Mammary epithelial cell (primary cell): ENCODE measurements at regions of chr1 and their contacts with region 1.

Region 1: GRCh38 chr1:167263819-167264464 is 43.3 kb downstream of the POU2F1 start:
- DNase-seq: no peak
- H3K4me3 ChIP-seq: no peak overlapping the region
- H3K27ac ChIP-seq: no peak overlapping the region
- H3K4me1 ChIP-seq: no peaks in the 10 kb centered on the region
- H3K27me3 ChIP-seq: no peaks in the 10 kb centered on the region
- CTCF ChIP-seq: no peak

Region 2: DNA sequence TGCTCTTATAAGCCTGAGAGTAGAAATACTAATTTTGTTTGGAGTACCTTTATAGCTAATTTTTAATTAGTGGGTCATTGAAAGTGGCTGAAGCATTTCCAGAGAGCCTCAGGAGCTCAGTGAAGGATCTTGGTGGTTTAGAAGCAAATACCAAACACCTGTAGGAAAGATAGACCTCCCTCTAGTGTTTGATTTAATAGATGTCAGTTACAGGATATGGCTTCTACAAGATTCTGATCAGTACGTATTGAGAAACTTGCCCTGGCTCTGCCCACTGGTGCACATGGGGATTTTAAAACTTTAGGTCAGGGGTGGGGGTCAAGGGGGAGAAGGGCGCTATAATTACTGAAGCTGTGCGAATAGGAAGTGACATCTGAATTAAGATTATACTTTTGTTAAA is 78.9 kb after region 1 on chr1:
- CTCF ChIA-PET with region 1: no interaction called
- dilution Hi-C with region 1: no loop called
- in situ Hi-C with region 1: no loop called
- intact Hi-C with region 1: loop called (anchors 2 kb)
- DNase-seq: no peak
- H3K4me3 ChIP-seq: no peak overlapping the region
- H3K27ac ChIP-seq: no peak overlapping the region
- H3K4me1 ChIP-seq: no peaks in the 10 kb centered on the region
- H3K27me3 ChIP-seq: no peaks in the 10 kb centered on the region
- CTCF ChIP-seq: peak; percentile 5 to 46

Region 3: DNA sequence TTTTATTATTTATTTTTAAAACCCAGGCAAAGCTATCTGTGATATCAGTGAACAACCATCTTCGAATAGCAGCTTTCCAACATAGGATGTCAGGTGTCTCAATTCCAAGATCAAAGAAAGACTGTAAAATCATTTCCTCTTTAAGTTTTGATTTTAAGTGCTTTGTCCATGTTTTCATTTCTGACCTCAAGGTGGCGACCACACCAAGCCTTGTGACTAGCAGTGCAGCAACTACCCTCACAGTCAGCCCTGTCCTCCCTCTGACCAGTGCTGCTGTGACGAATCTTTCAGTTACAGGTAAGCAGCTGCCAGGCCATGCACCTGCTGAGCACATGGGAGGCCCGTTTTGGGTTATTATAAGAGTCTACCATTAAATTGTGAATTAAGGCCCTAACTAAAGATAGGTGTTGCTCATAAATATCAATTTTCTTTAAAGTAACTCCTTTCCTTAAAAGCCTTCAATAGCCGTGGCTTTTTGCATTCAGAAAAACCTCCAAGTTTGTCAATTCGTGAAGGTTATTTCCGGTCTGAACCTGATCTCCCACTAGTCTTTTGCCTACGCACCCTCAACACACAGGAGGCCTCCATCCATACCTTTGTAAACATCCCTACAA is 137.4 kb after region 1 on chr1:
- CTCF ChIA-PET with region 1: no interaction called
- dilution Hi-C with region 1: no loop called
- in situ Hi-C with region 1: no loop called
- intact Hi-C with region 1: loop called (anchors 5 kb)
- DNase-seq: peak; percentile 57
- H3K4me3 ChIP-seq: no peak overlapping the region
- H3K27ac ChIP-seq: no peak overlapping the region
- H3K4me1 ChIP-seq: peaks cover 3% of the 10 kb centered on the region
- H3K27me3 ChIP-seq: no peaks in the 10 kb centered on the region
- CTCF ChIP-seq: peak; percentile 39 to 64

Region 4: GRCh38 chr1:167627865-167628641 is 364.1 kb after region 1 on chr1:
- CTCF ChIA-PET with region 1: no interaction called
- dilution Hi-C with region 1: loop called (anchors 10 kb)
- in situ Hi-C with region 1: no loop called
- intact Hi-C with region 1: no loop called
- DNase-seq: no peak
- H3K4me3 ChIP-seq: no peak overlapping the region
- H3K27ac ChIP-seq: no peak overlapping the region
- H3K4me1 ChIP-seq: peaks cover 15% of the 10 kb centered on the region
- H3K27me3 ChIP-seq: no peaks in the 10 kb centered on the region
- CTCF ChIP-seq: no peak